ENCODE measurements at regions of chr1 and their contacts with region 1.

Region 1: DNA sequence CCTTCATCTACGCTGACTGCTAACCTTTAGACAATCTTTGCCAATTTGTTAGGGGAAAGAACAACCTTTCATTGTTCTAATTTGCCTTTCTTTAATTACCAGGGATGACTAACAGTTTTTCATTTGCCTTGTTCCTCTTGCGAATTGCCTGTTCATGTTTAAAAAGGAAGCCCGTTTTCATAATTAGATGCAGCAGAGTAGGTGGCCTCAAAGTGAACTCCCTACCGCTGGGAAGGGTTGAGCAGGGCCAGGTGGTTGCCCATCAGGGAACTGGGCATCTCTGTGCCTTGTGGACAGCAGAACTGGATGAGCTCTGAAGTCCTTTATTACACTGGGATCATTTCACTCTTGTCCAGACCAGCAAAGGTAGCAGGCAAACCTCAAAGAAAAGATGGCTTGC is 59.0 kb downstream of the HIVEP3 start:
- DNase-seq: no peak
- H3K4me3 ChIP-seq: no peak overlapping the region
- H3K27ac ChIP-seq: no peak overlapping the region
- H3K4me1 ChIP-seq: peaks cover 0 to 6% (median 0%) of the 10 kb centered on the region in 4 donors
- H3K27me3 ChIP-seq: no peaks in the 10 kb centered on the region
- CTCF ChIP-seq: no peak
- EP300 ChIP-seq: no peak
- POLR2A ChIP-seq: no peak

Region 2: DNA sequence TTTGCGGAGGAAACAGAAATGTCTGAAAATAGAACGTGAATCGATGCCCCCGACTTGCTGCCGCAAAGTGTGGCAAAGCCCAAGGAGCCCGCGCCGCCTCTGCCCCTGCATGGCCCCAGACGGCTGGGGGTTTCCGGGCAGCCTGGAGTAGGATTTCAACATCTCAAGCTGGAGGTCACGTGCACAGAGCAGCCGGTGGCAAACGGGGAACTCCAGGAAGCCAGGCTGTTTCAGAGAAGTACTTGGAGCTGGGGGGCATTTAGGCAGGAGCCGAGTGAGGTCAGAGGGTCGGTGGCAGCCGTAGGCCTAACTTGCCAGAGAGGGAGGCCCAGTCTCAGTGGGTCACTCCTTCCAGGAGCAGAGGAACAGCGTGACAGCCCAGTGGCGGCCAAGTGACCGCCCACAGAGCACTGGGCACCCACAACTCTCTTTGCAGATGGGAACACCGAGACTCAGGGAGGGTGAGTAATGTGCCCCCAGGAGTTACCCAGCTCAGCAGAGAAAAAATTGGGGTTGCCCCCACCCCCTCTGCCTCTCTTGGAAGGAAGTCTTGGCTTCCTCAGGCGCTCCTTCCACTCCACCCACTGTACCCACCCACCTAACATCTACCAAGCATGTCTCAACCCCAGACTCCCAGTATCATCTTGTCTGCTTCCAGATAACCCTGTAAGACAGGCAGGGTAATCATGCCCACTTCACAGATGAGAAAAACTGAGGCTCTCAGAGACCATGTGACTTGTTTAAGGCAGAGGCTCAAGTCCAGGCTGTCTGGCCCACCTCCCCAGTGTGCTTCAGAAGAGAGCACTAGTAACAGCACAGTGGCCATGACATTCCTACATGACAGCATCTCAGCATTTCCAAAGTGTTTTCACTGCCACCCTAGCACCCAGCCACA is 120.4 kb before region 1 on chr1:
- in situ Hi-C with region 1: no loop called
- intact Hi-C with region 1: loop called (anchors 1 kb)
- DNase-seq: peak; percentile 72
- H3K4me3 ChIP-seq: no peak overlapping the region
- H3K27ac ChIP-seq: peak overlapping the region in 1 of 4 donors; percentile 64
- H3K4me1 ChIP-seq: peaks cover 0 to 22% (median 0%) of the 10 kb centered on the region in 4 donors
- H3K27me3 ChIP-seq: no peaks in the 10 kb centered on the region
- CTCF ChIP-seq: no peak
- EP300 ChIP-seq: no peak
- POLR2A ChIP-seq: no peak

Measured in transverse colon (tissue), 4 donors.